ENCODE measurements at regions of chr1 and their contacts with region 1.

Region 1: DNA sequence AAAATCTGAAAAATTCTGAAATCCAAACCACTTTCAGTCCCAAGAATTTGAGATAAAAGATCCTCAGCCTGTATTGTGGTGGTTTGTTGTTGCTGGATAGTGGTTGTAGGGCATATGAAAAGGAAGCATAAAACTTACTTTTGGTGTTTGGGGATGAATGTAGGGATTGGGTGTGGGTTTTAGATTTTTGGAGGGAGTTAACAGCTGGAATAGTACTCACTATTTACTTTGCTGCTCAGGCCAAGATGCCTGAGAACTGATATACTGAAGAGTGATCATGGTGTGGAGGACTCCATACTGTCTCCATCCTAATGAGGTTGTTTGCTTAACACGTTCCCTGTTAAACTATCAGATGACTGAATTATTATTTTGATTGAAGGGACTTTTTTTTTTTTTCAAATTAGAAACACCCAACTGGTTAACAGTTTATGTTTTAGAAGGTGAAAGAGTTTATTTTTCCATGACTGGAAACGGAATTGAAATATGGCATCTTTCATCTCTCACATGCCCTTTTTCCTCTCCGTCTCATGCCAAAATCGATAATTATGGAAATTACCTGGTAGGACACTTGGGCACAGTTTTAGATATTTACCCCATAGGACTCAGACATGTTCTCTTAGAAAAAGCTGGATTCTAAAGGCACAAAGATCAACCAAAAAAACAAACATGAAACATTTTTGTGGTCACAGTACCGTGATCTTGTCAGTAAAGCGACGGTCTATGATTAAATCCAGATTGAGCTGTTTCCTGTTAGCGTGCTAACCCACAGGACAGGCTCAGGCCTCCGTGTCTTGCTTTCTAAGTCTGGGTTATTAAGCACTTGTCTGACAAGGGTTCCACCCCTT is 37.3 kb downstream of the RGL1 start:
- DNase-seq: peak; percentile 44
- H3K4me3 Mint-ChIP-seq: peak overlapping the region; percentile 38
- H3K27ac Mint-ChIP-seq: peak overlapping the region; percentile 58
- H3K4me1 Mint-ChIP-seq: peaks cover 52% of the 10 kb centered on the region
- H3K27me3 Mint-ChIP-seq: no peaks in the 10 kb centered on the region
- CTCF ChIP-seq: no peak

Region 2: GRCh38 chr1:183881387-183882131 is 39.4 kb after region 1 on chr1:
- CTCF ChIA-PET with region 1: interaction called, 4 read pairs
- intact Hi-C with region 1: loop called (anchors 2 kb)
- DNase-seq: peak; percentile 96
- H3K4me3 Mint-ChIP-seq: peak overlapping the region; percentile 54
- H3K27ac Mint-ChIP-seq: peak overlapping the region; percentile 97
- H3K4me1 Mint-ChIP-seq: peaks cover 83% of the 10 kb centered on the region
- H3K27me3 Mint-ChIP-seq: no peaks in the 10 kb centered on the region
- CTCF ChIP-seq: no peak

Region 3: DNA sequence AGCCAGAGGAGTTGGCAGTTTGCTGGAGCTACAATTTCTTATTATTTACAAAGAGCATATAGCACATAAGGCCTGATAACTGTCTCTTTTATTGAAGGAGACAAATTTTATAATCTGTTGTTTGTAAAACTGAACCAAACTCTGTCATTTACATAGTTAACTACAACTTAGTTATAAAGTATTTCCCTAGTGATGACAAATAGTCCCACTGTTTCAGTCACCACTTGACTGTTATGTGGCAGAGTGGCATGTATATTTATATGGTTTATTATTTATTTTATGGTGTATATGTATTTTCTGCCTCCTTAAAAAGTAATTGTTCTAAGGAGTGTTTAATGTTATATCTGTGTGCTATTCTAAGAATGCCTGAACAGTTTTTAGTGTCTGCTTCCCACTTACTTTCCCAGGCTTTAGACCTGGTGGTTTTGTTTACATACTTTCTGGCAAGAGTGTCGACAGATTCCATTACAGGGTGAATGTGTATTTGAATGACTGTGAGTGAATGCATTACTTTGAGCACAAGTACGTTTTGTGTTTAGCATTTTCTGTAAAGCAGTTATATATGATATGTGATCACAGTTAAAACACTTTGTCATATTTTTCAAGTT is 219.3 kb after region 1 on chr1:
- CTCF ChIA-PET with region 1: no interaction called
- intact Hi-C with region 1: no loop called
- DNase-seq: no peak
- H3K4me3 Mint-ChIP-seq: no peak overlapping the region
- H3K27ac Mint-ChIP-seq: no peak overlapping the region
- H3K4me1 Mint-ChIP-seq: peaks cover 16% of the 10 kb centered on the region
- H3K27me3 Mint-ChIP-seq: no peaks in the 10 kb centered on the region
- CTCF ChIP-seq: no peak